Activated B cell treated with CpG ODN at 0.5 μM for 24 hours (primary cell): ENCODE measurements at regions of chr7 and their contacts with region 1.

Region 1: DNA sequence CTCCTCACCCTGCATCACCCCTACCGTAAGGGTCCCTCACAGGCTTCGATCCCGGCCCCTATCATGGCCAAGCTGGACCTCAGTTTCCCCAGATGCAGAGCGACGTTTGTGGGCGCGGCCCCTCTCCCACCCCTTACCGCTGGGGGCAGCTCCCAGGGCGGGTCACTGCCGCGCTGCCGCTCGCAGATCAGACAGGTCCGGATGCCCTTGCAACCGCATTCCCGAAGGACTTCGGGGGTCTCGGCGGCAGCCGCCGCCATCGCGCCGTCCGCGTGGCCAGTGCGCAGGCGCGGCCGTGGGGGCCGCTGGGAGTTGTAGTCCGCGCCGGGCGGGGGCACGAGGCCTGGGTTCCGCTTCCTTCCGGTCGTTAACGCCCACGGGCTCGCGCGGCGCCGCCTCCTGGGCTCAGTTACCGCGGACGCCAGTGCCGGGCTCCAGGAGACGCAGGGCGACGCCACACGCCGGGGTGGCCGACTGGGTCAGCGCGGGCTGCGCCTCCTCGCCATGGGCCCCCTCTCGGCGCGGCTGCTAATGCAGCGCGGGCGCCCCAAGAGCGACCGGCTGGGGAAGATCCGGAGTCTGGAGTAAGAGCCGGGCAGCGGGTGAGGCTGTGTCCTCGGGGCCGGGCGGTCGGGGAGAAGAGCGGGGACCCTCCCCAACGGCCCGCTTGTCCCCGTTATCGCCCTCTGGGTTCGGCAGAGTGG is at the starts of genes ALKBH4 and LRWD1:
- DNase-seq: peak; percentile 96
- ATAC-seq: peak; percentile 96
- H3K4me3 Mint-ChIP-seq: peak within 1 kb of the TSS; percentile 90
- H3K27ac Mint-ChIP-seq: peak within 1 kb of the TSS; percentile 72
- H3K4me1 Mint-ChIP-seq: peaks cover 33% of the 10 kb centered on the region
- H3K27me3 Mint-ChIP-seq: no peaks in the 10 kb centered on the region
- CTCF ChIP-seq: no peak
- total RNA-seq, gene ALKBH4: 7.8 and 8.1 TPM in 2 replicates
- total RNA-seq, gene LRWD1: 20.6 and 28.8 TPM in 2 replicates

Region 2: DNA sequence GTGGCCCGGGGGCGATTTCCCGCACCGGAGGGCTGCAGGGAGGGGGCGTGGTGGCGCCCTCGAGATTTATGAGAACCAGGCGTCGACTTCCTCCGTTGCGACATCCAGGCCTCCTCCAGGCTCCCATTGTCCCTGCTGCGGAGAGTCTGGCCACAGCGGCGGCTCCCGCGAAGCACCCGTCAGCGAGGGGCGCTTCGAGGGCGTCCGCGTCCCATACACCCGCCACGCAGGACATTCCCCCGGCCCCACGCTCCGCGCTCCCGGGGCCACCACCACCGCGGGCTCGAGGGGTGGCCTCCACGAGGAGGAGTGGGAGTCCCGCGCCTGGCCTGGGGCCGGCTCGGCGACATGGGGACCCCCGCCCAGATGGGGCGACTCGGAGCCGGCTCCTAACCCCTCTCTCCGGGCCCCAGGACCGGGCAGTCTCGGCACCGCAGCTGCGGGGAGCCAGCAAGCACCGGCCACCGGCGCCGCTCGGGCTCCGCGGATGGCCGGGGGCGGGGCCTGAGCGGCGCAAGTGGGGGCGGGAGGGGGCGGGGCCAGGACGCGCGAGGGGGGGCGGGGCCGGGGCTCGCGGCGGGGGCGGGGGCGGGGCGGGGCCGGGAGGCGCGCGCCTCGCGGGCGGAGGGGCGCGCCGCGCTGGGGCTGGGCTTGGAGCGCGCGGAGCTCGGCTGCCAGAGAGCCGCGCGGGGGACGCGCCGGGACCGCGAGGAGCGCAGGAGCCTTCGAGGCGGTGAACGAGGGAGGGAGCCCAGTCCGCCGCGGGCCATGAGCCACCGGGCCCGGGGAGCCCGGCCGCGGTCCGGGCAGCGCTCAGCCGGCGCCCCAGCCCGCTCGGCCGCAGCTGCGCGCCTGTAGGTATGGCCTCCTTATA is 178.3 kb before region 1 on chr7 and contains the start of gene SH2B2:
- CTCF ChIA-PET with region 1: no interaction called
- POLR2A ChIA-PET with region 1: no interaction called
- intact Hi-C with region 1: loop called (anchors 5 kb)
- DNase-seq: peak; percentile 83
- ATAC-seq: peak; percentile 38
- H3K4me3 Mint-ChIP-seq: peak within 1 kb of the TSS; percentile 83
- H3K27ac Mint-ChIP-seq: peak within 1 kb of the TSS; percentile 53
- H3K4me1 Mint-ChIP-seq: peaks cover 64% of the 10 kb centered on the region
- H3K27me3 Mint-ChIP-seq: no peaks in the 10 kb centered on the region
- CTCF ChIP-seq: no peak
- total RNA-seq, gene SH2B2: 28.2 and 32.1 TPM in 2 replicates

Region 3: GRCh38 chr7:102321351-102322177 is 143.2 kb before region 1 on chr7:
- CTCF ChIA-PET with region 1: no interaction called
- POLR2A ChIA-PET with region 1: no interaction called
- intact Hi-C with region 1: no loop called
- DNase-seq: peak; percentile 45
- ATAC-seq: peak; percentile 86
- H3K4me3 Mint-ChIP-seq: no peak overlapping the region
- H3K27ac Mint-ChIP-seq: no peak overlapping the region
- H3K4me1 Mint-ChIP-seq: peaks cover 34% of the 10 kb centered on the region
- H3K27me3 Mint-ChIP-seq: no peaks in the 10 kb centered on the region
- CTCF ChIP-seq: no peak

Region 4: GRCh38 chr7:102404005-102404861 is 60.5 kb before region 1 on chr7:
- CTCF ChIA-PET with region 1: interaction called, 19 read pairs
- POLR2A ChIA-PET with region 1: interaction called, 8 read pairs
- intact Hi-C with region 1: loop called (anchors 1 kb)
- DNase-seq: no peak
- ATAC-seq: peak; percentile 94
- H3K4me3 Mint-ChIP-seq: no peak overlapping the region
- H3K27ac Mint-ChIP-seq: no peak overlapping the region
- H3K4me1 Mint-ChIP-seq: peaks cover 37% of the 10 kb centered on the region
- H3K27me3 Mint-ChIP-seq: no peaks in the 10 kb centered on the region
- CTCF ChIP-seq: no peak

Region 5: DNA sequence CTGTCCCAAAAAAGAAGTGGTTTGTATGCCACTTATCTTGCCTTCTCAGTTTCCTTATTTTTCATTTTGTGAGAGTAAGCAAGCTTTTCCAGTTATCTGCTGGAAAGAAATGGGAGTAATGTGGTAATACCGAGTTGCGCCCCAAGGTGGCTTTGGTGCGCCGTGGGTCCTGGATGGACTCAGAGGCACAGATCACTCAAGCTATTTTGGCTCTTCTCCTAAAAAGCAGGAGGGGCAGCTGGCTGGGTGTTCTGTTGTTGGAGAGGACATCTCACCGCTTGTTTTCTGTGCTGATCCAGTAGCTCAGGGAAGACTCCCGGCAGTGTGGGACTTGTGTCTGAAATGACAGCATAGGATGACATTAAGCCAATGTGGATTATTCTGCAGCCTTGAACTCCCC is 52.2 kb before region 1 on chr7:
- CTCF ChIA-PET with region 1: interaction called, 12 read pairs
- POLR2A ChIA-PET with region 1: interaction called, 5 read pairs
- intact Hi-C with region 1: loop called (anchors 1 kb)
- DNase-seq: no peak
- ATAC-seq: no peak
- H3K4me3 Mint-ChIP-seq: no peak overlapping the region
- H3K27ac Mint-ChIP-seq: peak overlapping the region; percentile 41
- H3K4me1 Mint-ChIP-seq: peaks cover 76% of the 10 kb centered on the region
- H3K27me3 Mint-ChIP-seq: no peaks in the 10 kb centered on the region
- CTCF ChIP-seq: no peak

Region 6: GRCh38 chr7:102425639-102426267 is 39.0 kb before region 1 on chr7:
- CTCF ChIA-PET with region 1: no interaction called
- POLR2A ChIA-PET with region 1: interaction called, 13 read pairs
- intact Hi-C with region 1: no loop called
- DNase-seq: peak; percentile 81
- ATAC-seq: peak; percentile 76
- H3K4me3 Mint-ChIP-seq: peak overlapping the region; percentile 76
- H3K27ac Mint-ChIP-seq: peak overlapping the region; percentile 100
- H3K4me1 Mint-ChIP-seq: peaks cover 95% of the 10 kb centered on the region
- H3K27me3 Mint-ChIP-seq: no peaks in the 10 kb centered on the region
- CTCF ChIP-seq: no peak

Region 7: GRCh38 chr7:102433219-102434038 is 31.3 kb before region 1 on chr7 and contains the start of gene ORAI2:
- CTCF ChIA-PET with region 1: no interaction called
- POLR2A ChIA-PET with region 1: interaction called, 8 read pairs
- intact Hi-C with region 1: loop called (anchors 2 kb)
- DNase-seq: peak; percentile 89
- ATAC-seq: peak; percentile 57
- H3K4me3 Mint-ChIP-seq: peak within 1 kb of the TSS; percentile 89
- H3K27ac Mint-ChIP-seq: peak within 1 kb of the TSS; percentile 100
- H3K4me1 Mint-ChIP-seq: peaks cover 80% of the 10 kb centered on the region
- H3K27me3 Mint-ChIP-seq: no peaks in the 10 kb centered on the region
- CTCF ChIP-seq: no peak
- total RNA-seq, gene ORAI2: 167 and 184 TPM in 2 replicates

Region 8: GRCh38 chr7:102440078-102440795 is 24.5 kb before region 1 on chr7:
- CTCF ChIA-PET with region 1: no interaction called
- POLR2A ChIA-PET with region 1: interaction called, 6 read pairs
- intact Hi-C with region 1: loop called (anchors 1 kb)
- DNase-seq: no peak
- ATAC-seq: no peak
- H3K4me3 Mint-ChIP-seq: no peak overlapping the region
- H3K27ac Mint-ChIP-seq: peak overlapping the region; percentile 93
- H3K4me1 Mint-ChIP-seq: peaks cover 67% of the 10 kb centered on the region
- H3K27me3 Mint-ChIP-seq: no peaks in the 10 kb centered on the region
- CTCF ChIP-seq: no peak